HEK293 (cell line): ENCODE measurements at regions of chr20 and their contacts with region 1.

Region 1: DNA sequence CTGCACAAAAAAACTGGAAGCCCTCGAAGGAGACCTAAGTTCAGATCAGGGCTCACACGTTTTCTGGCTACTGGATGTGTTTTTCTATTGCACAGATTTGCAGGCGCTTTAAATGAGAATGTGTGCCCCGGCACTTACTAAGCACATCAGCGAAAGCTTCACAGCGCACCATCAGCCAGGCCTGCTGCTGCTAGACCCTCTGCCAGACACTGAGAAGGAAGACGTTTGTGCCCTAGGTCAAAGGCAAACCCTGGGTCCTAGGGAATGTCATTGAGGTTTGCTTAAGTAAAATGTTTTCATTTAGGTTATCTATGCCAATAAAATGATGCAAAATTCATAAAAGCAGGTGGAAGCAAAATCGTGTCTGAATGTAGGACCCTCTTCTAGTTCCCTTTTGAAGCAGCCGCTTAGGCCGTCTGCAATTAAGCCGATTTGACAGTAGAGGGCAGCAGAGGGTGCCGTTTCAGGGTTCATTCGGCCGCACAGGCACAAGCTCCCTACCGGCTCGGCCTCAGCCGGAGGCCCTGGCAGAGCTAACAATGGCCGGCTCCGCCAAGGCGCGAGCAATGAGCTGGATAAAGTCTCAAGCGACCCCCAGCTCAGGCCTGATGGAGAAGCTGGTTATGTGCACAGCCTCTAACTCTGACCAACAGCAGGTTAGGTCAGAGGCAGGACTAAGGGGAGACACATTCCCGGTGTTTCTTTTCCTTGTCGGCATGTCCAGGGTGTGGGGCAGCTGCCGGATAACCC is 107.2 kb upstream of the FOXA2 start:
- H3K4me3 ChIP-seq: no peak overlapping the region
- H3K27ac ChIP-seq: no peak overlapping the region
- H3K4me1 ChIP-seq: no peaks in the 10 kb centered on the region
- CTCF ChIP-seq: peak; percentile 66

Region 2: GRCh38 chr20:22716821-22717351 is 25.3 kb after region 1 on chr20:
- CTCF ChIA-PET with region 1: interaction called, 17 read pairs
- POLR2A ChIA-PET with region 1: interaction called, 4 read pairs
- H3K4me3 ChIP-seq: no peak overlapping the region
- H3K27ac ChIP-seq: no peak overlapping the region
- H3K4me1 ChIP-seq: no peaks in the 10 kb centered on the region
- CTCF ChIP-seq: no peak

Region 3: DNA sequence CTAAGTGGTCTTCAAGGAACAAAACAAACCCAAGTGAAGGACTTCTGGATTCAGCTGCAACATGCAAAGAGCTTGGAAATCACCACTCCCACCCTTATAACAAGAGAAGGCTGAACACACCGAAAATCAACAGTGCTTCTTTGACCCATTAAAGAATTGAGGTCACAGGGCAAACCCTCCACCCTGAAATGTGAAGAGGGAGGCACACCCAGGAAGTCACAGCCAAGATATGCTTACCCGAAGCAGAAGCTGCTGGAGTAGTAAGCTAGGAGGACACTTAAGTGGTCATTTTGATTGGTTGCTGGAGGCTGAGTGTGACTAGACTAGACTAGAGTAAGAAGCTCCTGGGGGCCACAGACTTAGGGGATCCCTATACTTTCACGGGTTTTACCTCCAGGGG is 155.3 kb after region 1 on chr20:
- CTCF ChIA-PET with region 1: interaction called, 13 read pairs
- POLR2A ChIA-PET with region 1: no interaction called
- H3K4me3 ChIP-seq: no peak overlapping the region
- H3K27ac ChIP-seq: no peak overlapping the region
- H3K4me1 ChIP-seq: peaks cover 4% of the 10 kb centered on the region; the same call in 1 of the 2 replicates
- CTCF ChIP-seq: no peak

Region 4: GRCh38 chr20:23050847-23051631 is 359.5 kb after region 1 on chr20:
- CTCF ChIA-PET with region 1: interaction called, 19 read pairs
- POLR2A ChIA-PET with region 1: no interaction called
- H3K4me3 ChIP-seq: peak overlapping the region; percentile 29
- H3K27ac ChIP-seq: no peak overlapping the region; the same call in 1 of the 2 replicates
- H3K4me1 ChIP-seq: no peaks in the 10 kb centered on the region
- CTCF ChIP-seq: peak; percentile 39

Region 5: GRCh38 chr20:23235173-23236027 is 543.9 kb after region 1 on chr20:
- CTCF ChIA-PET with region 1: interaction called, 32 read pairs
- POLR2A ChIA-PET with region 1: no interaction called
- H3K4me3 ChIP-seq: no peak overlapping the region
- H3K27ac ChIP-seq: no peak overlapping the region
- H3K4me1 ChIP-seq: no peaks in the 10 kb centered on the region
- CTCF ChIP-seq: peak; percentile 64